Posterior vena cava (tissue), 2 donors: ENCODE measurements at regions of chr2 and their contacts with region 1.

Region 1: GRCh38 chr2:233449081-233449901 is 95.0 kb downstream of the DGKD start:
- DNase-seq: peak; percentile 82

Region 2: GRCh38 chr2:233940376-233941276 is 491.3 kb after region 1 on chr2:
- intact Hi-C with region 1: loop called in 1 of 2 experiments (anchors 5 kb)
- DNase-seq: no peak